ENCODE measurements at regions of chr1 and their contacts with region 1.

Region 1: GRCh38 chr1:181189691-181190363 is 101.3 kb downstream of the IER5 start:
- DNase-seq: peak; percentile 28 to 83 (median 64)
- ATAC-seq: peak; percentile 88 to 95 (median 90)
- H3K4me3 ChIP-seq: peak overlapping the region in 1 of 2 donors; percentile 15
- H3K4me3 Mint-ChIP-seq: peak overlapping the region in 1 of 3 donors; percentile 65
- H3K27ac ChIP-seq: no peak overlapping the region
- H3K27ac Mint-ChIP-seq: no peak overlapping the region
- H3K4me1 ChIP-seq: peaks cover 0 to 9% of the 10 kb centered on the region in 2 experiments
- H3K4me1 Mint-ChIP-seq: peaks cover 4 to 14% (median 5%) of the 10 kb centered on the region in 3 donors
- H3K27me3 ChIP-seq: peaks cover 0 to 44% of the 10 kb centered on the region in 2 experiments
- H3K27me3 Mint-ChIP-seq: peaks cover 6 to 20% of the 10 kb centered on the region in 2 donors

Region 2: GRCh38 chr1:180997843-180998504 is 191.9 kb before region 1 on chr1:
- CTCF ChIA-PET with region 1: no interaction called
- POLR2A ChIA-PET with region 1: no interaction called
- DNase-seq: no peak
- ATAC-seq: no peak
- H3K4me3 ChIP-seq: no peak overlapping the region
- H3K4me3 Mint-ChIP-seq: no peak overlapping the region
- H3K27ac ChIP-seq: no peak overlapping the region
- H3K27ac Mint-ChIP-seq: no peak overlapping the region
- H3K4me1 ChIP-seq: no peaks in the 10 kb centered on the region
- H3K4me1 Mint-ChIP-seq: peaks cover 0 to 9% (median 7%) of the 10 kb centered on the region in 3 donors
- H3K27me3 ChIP-seq: no peaks in the 10 kb centered on the region
- H3K27me3 Mint-ChIP-seq: no peaks in the 10 kb centered on the region

Region 3: DNA sequence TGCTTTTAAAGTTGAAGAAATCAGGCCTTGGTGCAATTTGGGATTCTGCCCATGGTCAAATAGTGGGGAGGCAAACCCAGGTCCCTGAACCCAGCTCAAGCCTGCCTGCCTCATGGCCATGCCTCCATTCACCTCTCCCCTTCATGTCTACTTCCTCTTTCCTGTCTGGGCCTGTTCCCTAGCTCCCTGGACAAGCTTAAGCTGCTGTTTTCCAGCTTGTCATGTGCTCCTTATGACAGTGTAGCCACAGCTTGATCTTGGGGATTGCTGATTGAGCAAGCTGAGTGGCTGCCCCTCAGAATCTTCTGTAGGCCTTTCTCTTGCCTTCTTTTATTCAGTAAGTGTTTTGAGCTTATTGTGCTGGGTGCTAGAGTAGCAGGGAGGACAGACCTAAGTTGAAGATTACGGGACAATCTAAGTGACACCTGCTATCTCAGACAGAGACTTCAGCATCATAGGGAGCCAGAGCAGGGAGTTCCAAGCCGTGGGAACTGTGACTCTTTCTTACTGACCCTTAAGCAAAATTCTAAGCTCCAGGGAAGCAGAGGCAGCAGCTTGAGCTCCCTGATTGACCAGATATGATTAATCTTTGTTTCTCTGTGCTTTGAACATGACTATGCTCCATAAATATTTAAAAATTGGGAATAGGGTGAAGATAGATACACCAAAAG is 156.6 kb before region 1 on chr1:
- CTCF ChIA-PET with region 1: no interaction called
- POLR2A ChIA-PET with region 1: no interaction called
- DNase-seq: peak in 16 of 35 experiments; percentile 8 to 61 (median 29)
- ATAC-seq: peak; percentile 25 to 47 (median 38)
- H3K4me3 ChIP-seq: peak overlapping the region; percentile 63 to 87
- H3K4me3 Mint-ChIP-seq: peak overlapping the region; percentile 94 to 99 (median 95)
- H3K27ac ChIP-seq: peak overlapping the region; percentile 94
- H3K27ac Mint-ChIP-seq: peak overlapping the region; percentile 99 to 100
- H3K4me1 ChIP-seq: peaks cover 31 to 39% of the 10 kb centered on the region in 2 experiments
- H3K4me1 Mint-ChIP-seq: peaks cover 56 to 64% (median 56%) of the 10 kb centered on the region in 3 donors
- H3K27me3 ChIP-seq: no peaks in the 10 kb centered on the region
- H3K27me3 Mint-ChIP-seq: no peaks in the 10 kb centered on the region

Region 4: DNA sequence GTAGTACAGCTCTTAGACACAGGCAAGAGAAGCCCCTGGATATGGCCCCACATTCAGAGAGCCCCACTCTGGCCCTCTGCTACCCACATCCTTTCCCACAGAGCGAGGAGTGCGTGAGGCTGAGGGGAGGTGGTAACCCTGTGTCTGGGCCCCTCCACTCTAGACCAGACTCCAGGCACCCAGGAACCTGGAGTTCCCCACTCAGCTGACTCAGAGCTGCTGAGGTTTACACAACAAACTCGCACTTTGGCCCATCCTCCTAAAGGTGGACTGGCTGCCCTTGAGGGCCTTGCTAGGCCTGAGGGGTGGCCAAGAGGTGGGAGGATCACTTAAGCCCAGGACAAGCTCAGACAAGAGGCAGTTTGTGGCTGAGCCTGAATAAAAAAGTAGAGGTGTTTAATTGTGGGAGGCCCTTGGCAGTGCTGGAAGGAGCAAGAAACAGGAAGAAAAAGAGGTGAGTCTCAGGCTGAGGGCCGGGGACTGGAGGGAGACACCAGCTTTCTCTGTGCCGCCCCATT is 145.3 kb before region 1 on chr1:
- CTCF ChIA-PET with region 1: no interaction called
- POLR2A ChIA-PET with region 1: no interaction called
- DNase-seq: peak in 27 of 35 experiments; percentile 11 to 62 (median 31)
- ATAC-seq: peak; percentile 55 to 94 (median 68)
- H3K4me3 ChIP-seq: no peak overlapping the region
- H3K4me3 Mint-ChIP-seq: no peak overlapping the region
- H3K27ac ChIP-seq: no peak overlapping the region
- H3K27ac Mint-ChIP-seq: peak overlapping the region; percentile 48 to 66
- H3K4me1 ChIP-seq: peaks cover 10 to 20% of the 10 kb centered on the region in 2 experiments
- H3K4me1 Mint-ChIP-seq: peaks cover 38 to 46% (median 43%) of the 10 kb centered on the region in 3 donors
- H3K27me3 ChIP-seq: no peaks in the 10 kb centered on the region
- H3K27me3 Mint-ChIP-seq: no peaks in the 10 kb centered on the region

Region 5: DNA sequence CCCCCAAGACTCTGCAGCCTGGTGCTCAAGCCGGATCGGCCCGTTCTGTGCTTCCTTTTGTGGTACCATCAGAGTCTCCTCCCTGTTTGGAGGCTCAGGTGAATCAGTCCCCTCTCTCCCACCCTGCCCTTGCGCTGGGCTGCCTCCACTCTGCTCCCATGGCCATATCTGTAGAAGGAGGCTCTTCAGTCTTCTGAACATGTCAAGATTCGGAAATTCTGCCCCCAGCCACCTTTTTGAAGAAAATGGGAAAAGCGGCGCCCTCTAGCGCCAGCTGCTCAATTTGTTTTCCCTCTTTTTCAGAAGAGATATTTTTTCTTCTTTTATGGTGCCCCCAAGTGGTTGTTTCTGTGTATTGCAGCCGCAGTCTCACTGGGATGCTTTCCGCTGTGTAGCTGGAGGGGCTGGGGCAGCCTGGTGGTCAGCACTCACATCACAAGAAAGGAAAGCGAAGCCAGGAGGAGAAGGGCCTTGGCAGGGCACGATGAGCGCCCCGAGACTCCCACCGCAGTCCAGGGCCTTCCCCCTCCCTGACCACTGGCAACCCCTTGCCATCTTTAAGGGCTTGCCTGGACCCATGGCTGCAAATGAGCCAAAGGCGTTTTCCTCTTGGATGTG is 235.1 kb after region 1 on chr1:
- CTCF ChIA-PET with region 1: interaction called, 18 to 29 read pairs
- POLR2A ChIA-PET with region 1: no interaction called
- DNase-seq: peak; percentile 28 to 84 (median 67)
- ATAC-seq: peak; percentile 51 to 76 (median 66)
- H3K4me3 ChIP-seq: no peak overlapping the region
- H3K4me3 Mint-ChIP-seq: peak overlapping the region; percentile 64 to 65 (median 65)
- H3K27ac ChIP-seq: no peak overlapping the region
- H3K27ac Mint-ChIP-seq: peak overlapping the region in 1 of 2 donors; percentile 62
- H3K4me1 ChIP-seq: peaks cover 0 to 18% of the 10 kb centered on the region in 2 experiments
- H3K4me1 Mint-ChIP-seq: peaks cover 0 to 18% (median 13%) of the 10 kb centered on the region in 3 donors
- H3K27me3 ChIP-seq: peaks cover 0 to 34% of the 10 kb centered on the region in 2 experiments
- H3K27me3 Mint-ChIP-seq: peaks cover 15 to 27% of the 10 kb centered on the region in 2 donors

Region 6: DNA sequence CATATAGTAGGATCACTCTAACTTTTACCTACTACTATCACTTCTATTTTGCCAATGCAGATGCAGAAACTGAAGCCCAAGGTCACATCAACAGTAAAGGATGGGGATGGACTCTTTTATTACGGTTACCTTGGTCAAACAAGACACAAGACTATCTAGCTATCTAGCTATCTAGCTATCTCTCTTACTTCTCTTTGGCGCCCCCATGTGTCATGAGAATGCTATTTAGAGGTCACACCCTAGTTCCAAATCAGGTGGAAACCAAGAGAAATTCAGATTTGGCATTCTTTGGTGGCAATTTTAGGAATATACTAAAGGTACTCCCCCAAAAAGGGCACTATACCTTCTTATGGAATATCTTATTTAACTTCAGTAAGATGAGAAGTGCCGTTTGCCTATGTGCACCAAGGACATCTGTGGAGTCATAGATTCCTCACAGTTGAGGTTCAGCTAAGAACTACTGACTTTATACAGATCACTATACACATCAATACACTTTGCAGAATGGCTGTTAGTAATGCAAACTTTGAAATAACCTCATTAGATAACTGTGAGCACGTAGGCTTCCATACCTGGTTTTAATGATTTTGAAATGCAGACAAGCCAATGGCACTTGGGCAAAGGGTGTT is 865.0 kb after region 1 on chr1:
- CTCF ChIA-PET with region 1: interaction called in 1 of 2 experiments, 12 read pairs
- POLR2A ChIA-PET with region 1: no interaction called
- DNase-seq: peak in 29 of 35 experiments; percentile 17 to 73 (median 53)
- ATAC-seq: peak; percentile 40 to 66 (median 60)
- H3K4me3 ChIP-seq: no peak overlapping the region
- H3K4me3 Mint-ChIP-seq: no peak overlapping the region
- H3K27ac ChIP-seq: no peak overlapping the region
- H3K27ac Mint-ChIP-seq: no peak overlapping the region
- H3K4me1 ChIP-seq: peaks cover 0 to 3% of the 10 kb centered on the region in 2 experiments
- H3K4me1 Mint-ChIP-seq: peaks cover 4 to 7% (median 6%) of the 10 kb centered on the region in 3 donors
- H3K27me3 ChIP-seq: peaks cover 8 to 24% of the 10 kb centered on the region in 2 experiments
- H3K27me3 Mint-ChIP-seq: peaks cover 21 to 36% of the 10 kb centered on the region in 2 donors